Activated CD4-positive, alpha-beta memory T cell treated with anti-CD3 and anti-CD28 coated beads for 36 hours (primary cell): ENCODE measurements at regions of chr7 and their contacts with region 1.

Region 1: GRCh38 chr7:141014524-141015395 is at the start of gene MRPS33:
- DNase-seq: peak; percentile 97
- H3K4me3 Mint-ChIP-seq: peak within 1 kb of the TSS; percentile 98
- H3K27ac Mint-ChIP-seq: peak within 1 kb of the TSS; percentile 100
- H3K4me1 Mint-ChIP-seq: peaks cover 33% of the 10 kb centered on the region
- H3K27me3 Mint-ChIP-seq: peaks cover 5% of the 10 kb centered on the region
- total RNA-seq, gene MRPS33: 95.4 to 95.8 TPM

Region 2: DNA sequence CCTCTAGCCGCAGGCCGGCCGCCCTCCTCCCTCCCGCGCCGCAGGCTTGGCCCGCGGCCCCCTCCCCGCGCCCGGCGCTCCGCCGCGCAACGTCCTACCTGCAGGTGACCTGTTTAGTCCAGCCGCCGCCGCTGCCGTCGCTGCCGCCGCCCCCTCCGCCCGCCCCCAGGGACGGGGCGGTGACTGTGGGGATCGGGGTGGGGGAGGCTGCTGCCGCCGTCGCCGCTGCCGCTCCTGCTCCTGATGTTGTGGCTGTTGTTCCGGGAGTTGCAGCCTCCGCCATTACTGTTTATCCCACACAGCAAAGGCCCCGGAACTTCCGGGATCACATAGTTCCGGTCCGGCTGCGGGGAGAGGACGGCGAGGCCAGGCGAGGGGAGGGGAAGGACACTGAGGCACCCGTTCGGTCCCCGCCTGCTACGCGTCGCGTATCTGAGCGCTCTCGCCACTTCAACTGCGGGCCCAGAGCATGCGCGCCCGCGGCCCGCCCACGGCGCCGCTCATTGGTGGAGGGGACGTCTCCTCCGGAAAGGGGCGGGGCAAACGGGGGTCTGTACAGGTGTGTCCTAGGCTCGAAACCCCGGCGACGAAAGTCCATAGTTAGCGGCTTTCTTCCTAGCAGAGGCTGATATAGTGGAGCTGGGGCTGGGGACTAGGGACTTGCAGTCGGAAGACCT is 535.6 kb before region 1 on chr7 and contains the start of gene MKRN1:
- CTCF ChIA-PET with region 1: interaction called, 3 read pairs
- POLR2A ChIA-PET with region 1: interaction called, 6 read pairs
- intact Hi-C with region 1: loop called (anchors 1 kb)
- DNase-seq: peak; percentile 96
- H3K4me3 Mint-ChIP-seq: peak within 1 kb of the TSS; percentile 97
- H3K27ac Mint-ChIP-seq: peak within 1 kb of the TSS; percentile 96
- H3K4me1 Mint-ChIP-seq: peaks cover 27% of the 10 kb centered on the region
- H3K27me3 Mint-ChIP-seq: no peaks in the 10 kb centered on the region
- total RNA-seq, gene MKRN1: 104 to 106 TPM

Region 3: DNA sequence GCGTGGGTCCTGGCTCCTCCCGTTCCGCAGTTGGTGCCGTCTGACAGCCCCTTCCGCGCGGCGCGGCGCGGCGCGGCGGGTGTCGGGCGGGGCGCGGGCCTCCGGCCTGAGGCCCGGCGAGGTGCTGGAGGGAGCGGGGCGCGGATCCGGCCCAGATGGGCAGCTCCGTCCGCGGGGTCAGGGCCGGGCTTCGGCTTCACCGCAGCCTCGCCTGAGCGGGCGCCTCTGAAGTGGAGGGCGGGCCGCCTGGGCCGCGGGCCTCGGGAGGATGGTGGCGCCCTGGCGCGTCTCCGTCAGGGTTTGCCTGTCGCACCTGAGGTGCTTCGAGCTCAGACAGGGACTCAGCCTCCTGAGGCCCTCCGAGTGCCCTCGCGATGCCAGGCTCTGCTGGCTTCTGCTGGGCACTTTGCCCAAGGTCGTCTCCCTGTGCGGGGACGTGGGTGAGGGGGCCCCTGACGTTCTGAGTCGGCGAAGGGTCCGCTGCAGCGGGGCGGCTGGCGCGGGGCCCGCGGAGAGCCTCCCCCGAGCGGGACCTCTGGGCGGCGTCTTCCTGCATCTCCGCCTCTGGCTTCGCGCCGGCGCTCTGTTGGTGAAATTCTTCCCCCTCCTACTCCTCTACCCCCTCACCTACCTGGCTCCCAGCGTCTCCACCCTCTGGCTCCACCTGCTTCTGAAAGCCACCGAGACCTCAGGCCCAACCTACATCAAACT is 341.5 kb before region 1 on chr7:
- CTCF ChIA-PET with region 1: interaction called, 4 read pairs
- POLR2A ChIA-PET with region 1: no interaction called
- intact Hi-C with region 1: loop called (anchors 1 kb)
- DNase-seq: peak; percentile 67
- H3K4me3 Mint-ChIP-seq: peak overlapping the region; percentile 82
- H3K27ac Mint-ChIP-seq: peak overlapping the region; percentile 54
- H3K4me1 Mint-ChIP-seq: peaks cover 33% of the 10 kb centered on the region
- H3K27me3 Mint-ChIP-seq: no peaks in the 10 kb centered on the region

Region 4: DNA sequence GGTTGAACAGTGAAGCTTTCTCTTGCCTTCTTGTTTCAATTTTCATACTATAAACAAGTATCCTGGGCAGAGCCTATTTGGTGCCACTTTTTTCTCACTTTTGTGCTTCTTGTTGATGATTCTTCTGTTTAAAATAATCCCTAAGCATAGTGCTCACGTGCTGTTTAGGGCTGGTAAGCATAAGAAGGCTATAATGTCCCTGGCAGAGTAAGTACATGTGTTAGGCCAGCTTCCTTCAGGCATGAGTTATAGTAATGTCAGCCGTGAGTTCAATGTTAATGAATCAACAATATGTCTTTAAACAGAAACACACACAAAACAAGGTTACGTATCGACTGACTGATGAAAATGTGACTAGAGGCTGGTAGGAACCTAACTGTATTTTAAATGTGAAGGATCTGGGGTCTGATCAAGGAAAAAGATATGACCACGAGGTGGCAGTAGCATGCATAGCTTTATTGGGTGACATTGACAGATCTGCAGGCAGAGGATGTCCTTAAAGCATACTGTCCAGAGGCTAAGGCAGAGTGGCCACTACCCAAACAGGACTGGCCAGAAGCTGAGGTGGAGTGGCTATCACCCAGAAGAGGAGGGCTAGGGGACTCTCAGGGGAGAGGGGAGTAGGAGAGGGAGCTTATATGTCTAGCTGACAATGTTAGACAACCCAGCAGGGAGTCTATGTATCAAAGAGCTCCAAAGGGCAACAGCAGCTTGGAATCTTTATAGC is 203.8 kb before region 1 on chr7:
- CTCF ChIA-PET with region 1: interaction called, 108 read pairs
- POLR2A ChIA-PET with region 1: no interaction called
- intact Hi-C with region 1: loop called (anchors 1 kb)
- DNase-seq: peak; percentile 58
- H3K4me3 Mint-ChIP-seq: no peak overlapping the region
- H3K27ac Mint-ChIP-seq: no peak overlapping the region
- H3K4me1 Mint-ChIP-seq: no peaks in the 10 kb centered on the region
- H3K27me3 Mint-ChIP-seq: no peaks in the 10 kb centered on the region

Region 5: DNA sequence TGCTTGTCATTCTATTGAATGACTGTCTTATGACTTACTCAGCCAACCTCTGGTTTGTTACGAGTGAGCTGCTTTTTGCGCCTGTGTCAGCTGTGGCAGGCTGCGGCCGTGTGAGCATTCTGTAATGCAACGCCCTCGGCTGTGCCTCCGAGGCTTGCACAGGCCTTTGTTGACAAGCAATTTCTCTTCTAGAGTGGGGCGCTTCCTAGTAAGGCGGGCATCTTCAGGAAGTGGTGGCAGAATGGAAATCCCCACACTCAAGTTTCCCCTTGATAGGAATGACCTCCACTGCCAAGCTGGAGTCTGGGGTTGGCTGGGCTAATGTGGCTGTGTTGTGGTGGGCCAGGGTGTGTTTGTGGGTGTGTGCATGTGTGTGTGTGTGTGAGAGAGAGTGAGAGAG is 38.9 kb after region 1 on chr7:
- CTCF ChIA-PET with region 1: interaction called, 4 read pairs
- POLR2A ChIA-PET with region 1: interaction called, 5 read pairs
- intact Hi-C with region 1: loop called (anchors 1 kb)
- DNase-seq: peak; percentile 84
- H3K4me3 Mint-ChIP-seq: no peak overlapping the region
- H3K27ac Mint-ChIP-seq: peak overlapping the region; percentile 57
- H3K4me1 Mint-ChIP-seq: peaks cover 22% of the 10 kb centered on the region
- H3K27me3 Mint-ChIP-seq: no peaks in the 10 kb centered on the region

Region 6: GRCh38 chr7:141533149-141533949 is 518.6 kb after region 1 on chr7:
- CTCF ChIA-PET with region 1: interaction called, 6 read pairs
- POLR2A ChIA-PET with region 1: interaction called, 5 read pairs
- intact Hi-C with region 1: loop called (anchors 2 kb)
- DNase-seq: peak; percentile 71
- H3K4me3 Mint-ChIP-seq: no peak overlapping the region
- H3K27ac Mint-ChIP-seq: no peak overlapping the region
- H3K4me1 Mint-ChIP-seq: peaks cover 2% of the 10 kb centered on the region
- H3K27me3 Mint-ChIP-seq: peaks cover 8% of the 10 kb centered on the region

Region 7: GRCh38 chr7:141737834-141738591 is 723.3 kb after region 1 on chr7 and contains the start of gene SSBP1:
- CTCF ChIA-PET with region 1: interaction called, 9 read pairs
- POLR2A ChIA-PET with region 1: no interaction called
- intact Hi-C with region 1: loop called (anchors 1 kb)
- DNase-seq: peak; percentile 96
- H3K4me3 Mint-ChIP-seq: peak within 1 kb of the TSS; percentile 99
- H3K27ac Mint-ChIP-seq: peak within 1 kb of the TSS; percentile 99
- H3K4me1 Mint-ChIP-seq: peaks cover 35% of the 10 kb centered on the region
- H3K27me3 Mint-ChIP-seq: no peaks in the 10 kb centered on the region
- total RNA-seq, gene SSBP1: 207 to 234 TPM